Activated B cell treated with CpG ODN at 0.5 μM for 24 hours (primary cell): ENCODE measurements at regions of chr2 and their contacts with region 1.

Region 1: GRCh38 chr2:19901442-19902215 is at the start of gene TTC32:
- DNase-seq: peak; percentile 91
- ATAC-seq: peak; percentile 91
- H3K4me3 Mint-ChIP-seq: peak within 1 kb of the TSS; percentile 99
- H3K27ac Mint-ChIP-seq: peak within 1 kb of the TSS; percentile 99
- H3K4me1 Mint-ChIP-seq: peaks cover 44% of the 10 kb centered on the region
- H3K27me3 Mint-ChIP-seq: peaks cover 7% of the 10 kb centered on the region
- CTCF ChIP-seq: no peak
- total RNA-seq, gene TTC32: 18.4 and 22.8 TPM in 2 replicates

Region 2: DNA sequence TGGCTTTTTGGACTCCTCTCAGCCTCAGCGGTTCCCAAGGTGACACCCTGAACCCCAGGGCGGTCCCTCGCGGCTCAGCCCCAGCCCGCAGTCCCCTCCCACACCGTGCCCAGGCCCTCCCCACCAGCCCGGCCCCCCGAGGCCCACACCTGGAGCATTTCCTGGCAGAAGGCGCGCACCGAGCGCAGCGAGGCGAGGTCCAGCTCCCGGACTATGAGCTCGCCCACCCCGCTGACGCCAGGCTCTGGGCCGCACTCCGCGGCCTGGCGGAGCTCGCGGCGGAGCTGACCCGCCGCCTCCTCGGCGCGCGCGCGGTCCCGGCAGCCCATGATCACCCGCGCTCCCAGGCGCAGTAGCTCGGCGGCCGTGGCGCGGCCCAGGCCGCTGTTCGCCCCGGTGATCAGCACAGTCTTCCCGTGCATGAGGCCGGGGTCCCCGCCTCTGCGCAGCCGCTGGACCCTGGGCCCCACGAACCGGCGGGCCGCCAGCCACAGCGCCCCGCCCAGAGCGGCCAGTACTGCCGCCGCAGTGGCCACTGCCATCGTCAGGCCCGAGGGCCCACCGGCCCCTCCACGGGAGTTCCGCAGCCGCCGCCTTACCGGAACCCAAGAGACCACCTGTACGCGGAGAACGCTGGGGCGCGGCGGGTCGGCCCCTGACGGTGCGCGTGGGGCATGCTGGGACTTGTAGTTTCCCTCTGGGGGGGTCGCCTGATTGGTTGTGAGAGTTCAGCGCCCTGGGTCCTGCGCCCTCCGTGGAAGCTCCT is 1341.4 kb before region 1 on chr2 and contains the start of gene RDH14:
- CTCF ChIA-PET with region 1: no interaction called
- POLR2A ChIA-PET with region 1: interaction called, 4 read pairs
- intact Hi-C with region 1: loop called (anchors 1 kb)
- DNase-seq: peak; percentile 91
- ATAC-seq: peak; percentile 92
- H3K4me3 Mint-ChIP-seq: peak within 1 kb of the TSS; percentile 92
- H3K27ac Mint-ChIP-seq: peak within 1 kb of the TSS; percentile 91
- H3K4me1 Mint-ChIP-seq: peaks cover 32% of the 10 kb centered on the region
- H3K27me3 Mint-ChIP-seq: no peaks in the 10 kb centered on the region
- CTCF ChIP-seq: no peak
- total RNA-seq, gene RDH14: 18.7 and 19.6 TPM in 2 replicates

Region 3: DNA sequence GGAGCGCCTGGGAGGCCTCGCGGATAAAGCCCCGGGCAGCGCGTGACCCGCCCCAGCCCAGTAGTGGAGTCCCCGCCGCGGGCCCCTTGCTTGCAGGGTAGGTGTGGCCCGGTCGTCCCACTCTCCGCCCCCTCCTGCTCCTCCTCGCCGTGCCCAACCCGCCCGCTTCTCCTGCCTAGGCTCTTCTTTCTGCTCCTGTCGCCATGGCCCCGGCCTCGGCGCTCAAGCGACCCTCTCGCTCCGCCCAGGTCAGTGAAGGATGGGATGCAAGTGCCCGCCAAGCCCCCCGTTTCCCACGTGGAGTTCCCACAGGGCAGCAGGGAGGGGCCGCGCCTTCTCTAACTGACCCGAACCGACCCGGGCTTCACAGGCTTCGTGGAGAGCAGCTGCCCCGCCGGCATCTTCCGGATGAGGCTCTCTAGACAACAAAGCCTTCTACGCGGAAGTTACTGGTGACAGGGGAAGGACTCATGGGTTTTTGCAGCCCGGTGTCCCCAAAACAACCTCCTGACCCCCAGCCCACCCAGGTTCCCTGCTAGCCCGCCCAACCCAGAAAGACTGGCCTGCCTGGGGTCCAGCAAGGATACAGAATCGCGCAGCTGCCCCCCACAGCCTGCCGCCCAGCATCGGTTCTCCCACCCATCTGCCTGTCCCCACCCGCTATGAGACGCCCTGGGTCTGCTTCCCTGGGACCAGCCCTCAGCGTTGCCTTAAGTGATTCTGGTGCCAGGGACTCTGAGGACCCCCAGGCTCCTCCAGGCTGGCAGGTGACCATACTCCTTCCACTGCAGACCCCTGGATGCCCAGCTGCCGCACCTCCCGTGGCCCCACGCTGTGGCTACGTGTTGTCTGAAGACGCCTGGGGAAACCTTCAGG is 32.7 kb before region 1 on chr2:
- CTCF ChIA-PET with region 1: no interaction called
- POLR2A ChIA-PET with region 1: interaction called, 3 read pairs
- intact Hi-C with region 1: loop called (anchors 2 kb)
- DNase-seq: peak; percentile 50
- ATAC-seq: peak; percentile 89
- H3K4me3 Mint-ChIP-seq: peak overlapping the region; percentile 91
- H3K27ac Mint-ChIP-seq: peak overlapping the region; percentile 88
- H3K4me1 Mint-ChIP-seq: peaks cover 22% of the 10 kb centered on the region
- H3K27me3 Mint-ChIP-seq: no peaks in the 10 kb centered on the region
- CTCF ChIP-seq: no peak

Region 4: GRCh38 chr2:19989681-19990415 is 88.2 kb after region 1 on chr2 and contains the start of gene WDR35:
- CTCF ChIA-PET with region 1: no interaction called
- POLR2A ChIA-PET with region 1: interaction called, 3 read pairs
- intact Hi-C with region 1: loop called (anchors 1 kb)
- DNase-seq: peak; percentile 93
- ATAC-seq: peak; percentile 89
- H3K4me3 Mint-ChIP-seq: peak within 1 kb of the TSS; percentile 91
- H3K27ac Mint-ChIP-seq: peak within 1 kb of the TSS; percentile 85
- H3K4me1 Mint-ChIP-seq: peaks cover 31% of the 10 kb centered on the region
- H3K27me3 Mint-ChIP-seq: peaks cover 18% of the 10 kb centered on the region
- CTCF ChIP-seq: no peak
- total RNA-seq, gene WDR35: 8.1 and 8.2 TPM in 2 replicates